Dorsolateral prefrontal cortex (tissue), 120 donors: ENCODE measurements at regions of chr6 and their contacts with region 1.

Region 1: DNA sequence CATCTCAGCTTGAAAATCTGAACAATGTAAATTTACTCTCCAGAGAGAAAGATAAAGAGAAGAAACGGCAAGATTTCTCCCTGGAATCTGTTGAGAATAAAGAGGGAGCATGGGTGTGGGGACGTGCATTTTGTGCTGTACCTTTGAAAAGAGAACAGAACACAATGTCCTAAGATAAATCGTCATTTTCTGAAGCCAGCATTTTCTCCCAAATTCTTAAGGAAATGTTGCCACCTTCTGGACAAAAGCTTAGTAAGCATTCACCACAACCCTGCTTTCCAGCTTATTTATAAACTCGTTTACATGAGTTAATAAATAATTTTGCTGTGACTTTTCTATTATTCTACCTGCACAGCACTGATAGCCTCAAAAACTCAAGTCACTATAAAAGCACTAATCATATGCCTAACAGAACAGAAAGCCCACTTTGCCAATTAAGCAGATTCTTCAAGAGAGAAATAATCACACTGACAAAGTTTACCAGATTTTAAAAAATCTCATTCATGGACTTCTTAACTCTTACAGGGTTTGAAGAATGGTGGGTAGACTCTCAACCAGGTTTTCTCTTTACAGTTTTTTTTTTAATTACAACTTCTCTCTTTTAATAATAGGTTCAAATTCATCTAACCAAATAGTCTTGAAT is 155.8 kb downstream of the MBOAT1 start:
- DNase-seq: no peak
- H3K4me3 ChIP-seq: peak overlapping the region in 11 of 59 donors; percentile 5 to 35 (median 23)
- H3K27ac ChIP-seq: peak overlapping the region in 7 of 59 donors; percentile 1 to 57 (median 14)
- H3K27me3 ChIP-seq: no peaks in the 10 kb centered on the region
- CTCF ChIP-seq: peak; percentile 52 to 86 (median 72)

Region 2: DNA sequence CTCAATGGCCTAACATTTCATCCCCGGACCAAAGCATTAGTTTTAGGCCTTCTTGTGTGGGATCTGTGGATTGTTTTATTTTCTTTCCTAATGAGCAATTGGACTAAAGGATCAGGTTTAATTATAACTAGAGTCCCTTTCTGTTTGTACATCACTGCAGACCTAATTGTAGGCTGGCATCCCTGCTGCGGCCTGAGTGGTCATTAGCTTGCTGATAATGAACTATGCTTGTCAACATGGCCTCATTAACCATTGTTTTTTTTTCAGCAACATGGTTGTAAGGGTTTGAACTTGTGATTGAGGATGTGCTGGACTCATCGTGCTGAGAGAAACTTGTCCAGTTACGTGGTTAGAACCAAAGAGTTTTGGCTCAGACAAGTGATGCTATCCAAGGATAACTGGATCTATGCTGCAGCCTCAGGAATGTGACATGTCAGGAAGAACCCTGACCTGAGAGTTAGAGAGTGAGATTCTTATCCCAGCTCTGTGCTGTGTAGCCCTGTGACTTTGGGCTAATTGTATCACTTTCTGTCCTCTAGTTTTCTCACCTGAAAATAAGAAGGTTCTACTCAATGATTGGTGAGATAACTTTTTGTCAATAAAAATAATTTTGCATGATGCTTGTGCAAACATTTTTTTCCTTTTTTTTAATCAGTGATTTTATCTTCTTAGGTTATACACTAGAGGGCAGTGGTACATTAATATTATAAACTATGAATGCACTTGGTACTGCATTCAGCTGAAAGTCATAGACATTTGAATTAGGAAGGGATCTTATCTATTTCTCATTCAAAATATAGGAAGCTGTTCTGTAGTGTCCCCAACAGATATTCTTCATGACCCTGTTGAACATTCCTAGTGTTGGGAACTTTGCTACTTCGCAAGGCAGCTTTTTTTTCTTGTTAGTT is 1528.4 kb before region 1 on chr6:
- intact Hi-C with region 1: loop called in 1 of 2 experiments (anchors 10 kb)
- DNase-seq: no peak
- H3K4me3 ChIP-seq: no peak overlapping the region
- H3K27ac ChIP-seq: no peak overlapping the region
- H3K27me3 ChIP-seq: peaks cover 0 to 4% (median 0%) of the 10 kb centered on the region in 45 donors
- CTCF ChIP-seq: peak in 55 of 56 donors; percentile 18 to 71 (median 49)

Region 3: GRCh38 chr6:18595774-18596530 is 1460.5 kb before region 1 on chr6:
- intact Hi-C with region 1: loop called (anchors 2 to 10 kb)
- DNase-seq: peak in 8 of 10 donors; percentile 46 to 80 (median 58)
- H3K4me3 ChIP-seq: peak overlapping the region in 5 of 59 donors; percentile 6 to 38 (median 9)
- H3K27ac ChIP-seq: peak overlapping the region in 12 of 59 donors; percentile 2 to 57 (median 26)
- H3K27me3 ChIP-seq: no peaks in the 10 kb centered on the region
- CTCF ChIP-seq: peak; percentile 82 to 99 (median 96)

Region 4: DNA sequence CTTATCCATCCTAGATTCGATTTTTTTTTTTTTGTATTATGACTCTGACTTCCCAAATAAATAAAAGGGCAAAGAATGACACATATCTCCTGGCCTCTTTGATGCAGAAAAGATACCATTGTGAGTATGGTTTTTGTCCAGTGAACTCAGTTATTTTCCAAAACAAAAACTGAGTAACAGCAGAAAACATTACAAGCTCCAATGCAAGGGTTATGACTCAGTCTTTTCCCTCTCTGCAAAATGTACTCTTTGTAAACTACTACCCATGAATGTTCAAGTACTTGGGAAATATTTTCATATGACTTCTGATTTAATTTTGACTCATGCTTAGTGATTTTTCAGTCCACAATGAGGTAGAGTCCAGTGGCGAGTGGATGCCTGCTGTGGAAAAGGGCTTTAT is 1314.1 kb before region 1 on chr6:
- intact Hi-C with region 1: loop called (anchors 5 to 10 kb)
- DNase-seq: no peak
- H3K4me3 ChIP-seq: no peak overlapping the region
- H3K27ac ChIP-seq: no peak overlapping the region
- H3K27me3 ChIP-seq: peaks cover 0 to 9% (median 0%) of the 10 kb centered on the region in 45 donors
- CTCF ChIP-seq: no peak